K562 (cell line): ENCODE measurements at regions of chr5 and their contacts with region 1.

Region 1: DNA sequence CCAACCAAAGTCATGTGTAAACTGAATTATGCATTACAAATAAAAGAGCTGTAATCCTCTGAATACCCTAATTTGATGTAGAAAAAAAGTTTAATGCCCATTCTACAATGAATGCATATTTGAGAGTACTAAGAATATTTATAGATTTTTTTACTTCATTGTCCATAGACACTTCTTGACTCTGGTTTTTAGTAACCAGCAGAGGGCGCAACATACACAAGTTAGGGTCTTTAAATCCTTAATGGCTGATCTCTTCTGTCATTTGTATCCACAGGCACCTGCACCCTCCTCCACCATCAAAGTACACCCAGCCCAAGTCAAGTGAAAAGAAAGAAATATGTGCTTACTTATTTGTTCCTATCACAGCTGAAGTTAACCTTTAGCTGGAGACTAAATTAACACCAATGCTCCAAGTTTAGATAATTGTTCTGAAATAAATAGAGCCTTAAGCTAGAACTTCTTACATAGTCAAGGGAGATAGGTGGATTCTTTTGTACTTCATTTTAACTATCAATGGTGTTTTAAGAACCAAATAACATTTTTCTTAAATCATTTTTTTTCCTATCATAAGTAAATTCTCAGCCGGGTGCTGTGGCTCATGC is 524.2 kb upstream of the DAB2 start:
- DNase-seq: peak; percentile 42 to 70 (median 51)
- ATAC-seq: peak; percentile 85
- H3K4me3 ChIP-seq: no peak overlapping the region
- H3K27ac ChIP-seq: no peak overlapping the region
- H3K4me1 ChIP-seq: no peaks in the 10 kb centered on the region
- H3K27me3 ChIP-seq: no peaks in the 10 kb centered on the region
- CTCF ChIP-seq: peak; percentile 37 to 70 (median 53); a peak in 4 of 6 replicates
- EP300 ChIP-seq: no peak
- POLR2A ChIP-seq: no peak
- RAD21 ChIP-seq: peak; percentile 79 to 80

Region 2: GRCh38 chr5:39599721-39600431 is 349.1 kb before region 1 on chr5:
- CTCF ChIA-PET with region 1: no interaction called
- POLR2A ChIA-PET with region 1: no interaction called
- in situ Hi-C with region 1: no loop called
- intact Hi-C with region 1: loop called (anchors 10 kb)
- DNase-seq: peak in 3 of 4 experiments; percentile 18 to 52 (median 21)
- ATAC-seq: peak; percentile 76
- H3K4me3 ChIP-seq: no peak overlapping the region
- H3K27ac ChIP-seq: no peak overlapping the region
- H3K4me1 ChIP-seq: no peaks in the 10 kb centered on the region
- H3K27me3 ChIP-seq: no peaks in the 10 kb centered on the region
- CTCF ChIP-seq: peak; percentile 27 to 68 (median 36); a peak in 3 of 6 replicates
- EP300 ChIP-seq: no peak
- POLR2A ChIP-seq: no peak
- RAD21 ChIP-seq: peak; percentile 53 to 60

Region 3: GRCh38 chr5:39616131-39616530 is 332.8 kb before region 1 on chr5:
- CTCF ChIA-PET with region 1: no interaction called
- POLR2A ChIA-PET with region 1: no interaction called
- in situ Hi-C with region 1: no loop called
- intact Hi-C with region 1: no loop called
- DNase-seq: no peak
- ATAC-seq: no peak
- H3K4me3 ChIP-seq: no peak overlapping the region
- H3K27ac ChIP-seq: no peak overlapping the region
- H3K4me1 ChIP-seq: no peaks in the 10 kb centered on the region
- H3K27me3 ChIP-seq: no peaks in the 10 kb centered on the region; a peak in 1 of 5 replicates
- CTCF ChIP-seq: no peak
- EP300 ChIP-seq: no peak
- POLR2A ChIP-seq: no peak
- RAD21 ChIP-seq: no peak

Region 4: GRCh38 chr5:40736103-40736875 is 787.3 kb after region 1 on chr5:
- CTCF ChIA-PET with region 1: interaction called, 8 read pairs
- POLR2A ChIA-PET with region 1: no interaction called
- in situ Hi-C with region 1: no loop called
- intact Hi-C with region 1: loop called (anchors 2 kb)
- DNase-seq: peak; percentile 55 to 73 (median 62)
- ATAC-seq: peak; percentile 92
- H3K4me3 ChIP-seq: no peak overlapping the region
- H3K27ac ChIP-seq: no peak overlapping the region
- H3K4me1 ChIP-seq: peaks cover 0 to 7% of the 10 kb centered on the region in 2 experiments; a peak in 2 of 5 replicates
- H3K27me3 ChIP-seq: no peaks in the 10 kb centered on the region
- CTCF ChIP-seq: peak; percentile 57 to 87 (median 65); a peak in 5 of 6 replicates
- EP300 ChIP-seq: no peak
- POLR2A ChIP-seq: no peak
- RAD21 ChIP-seq: peak; percentile 73 to 86